CD4-positive, alpha-beta memory T cell (primary cell): ENCODE measurements at regions of chr14 and their contacts with region 1.

Region 1: GRCh38 chr14:60151715-60152114 is 13.5 kb downstream of the DHRS7 start:
- DNase-seq: peak; percentile 63 to 85 (median 68)
- H3K4me3 ChIP-seq: no peak overlapping the region
- H3K4me3 Mint-ChIP-seq: peak overlapping the region in 7 of 8 donors; percentile 17 to 69 (median 36)
- H3K27ac ChIP-seq: peak overlapping the region; percentile 50
- H3K27ac Mint-ChIP-seq: peak overlapping the region; percentile 90 to 95 (median 94)
- H3K4me1 ChIP-seq: peaks cover 49% of the 10 kb centered on the region
- H3K4me1 Mint-ChIP-seq: peaks cover 35 to 54% (median 44%) of the 10 kb centered on the region in 4 donors
- H3K27me3 ChIP-seq: no peaks in the 10 kb centered on the region
- H3K27me3 Mint-ChIP-seq: no peaks in the 10 kb centered on the region

Region 2: GRCh38 chr14:60057793-60058486 is 93.8 kb before region 1 on chr14:
- CTCF ChIA-PET with region 1: no interaction called
- POLR2A ChIA-PET with region 1: no interaction called
- intact Hi-C with region 1: no loop called
- DNase-seq: no peak
- H3K4me3 ChIP-seq: no peak overlapping the region
- H3K4me3 Mint-ChIP-seq: no peak overlapping the region
- H3K27ac ChIP-seq: no peak overlapping the region
- H3K27ac Mint-ChIP-seq: no peak overlapping the region
- H3K4me1 ChIP-seq: no peaks in the 10 kb centered on the region
- H3K4me1 Mint-ChIP-seq: no peaks in the 10 kb centered on the region
- H3K27me3 ChIP-seq: peaks cover 3% of the 10 kb centered on the region
- H3K27me3 Mint-ChIP-seq: peaks cover 5 to 22% of the 10 kb centered on the region in 2 donors

Region 3: GRCh38 chr14:60116181-60116580 is 35.5 kb before region 1 on chr14:
- CTCF ChIA-PET with region 1: no interaction called
- POLR2A ChIA-PET with region 1: no interaction called
- intact Hi-C with region 1: loop called (anchors 5 kb)
- DNase-seq: no peak
- H3K4me3 ChIP-seq: no peak overlapping the region
- H3K4me3 Mint-ChIP-seq: no peak overlapping the region
- H3K27ac ChIP-seq: no peak overlapping the region
- H3K27ac Mint-ChIP-seq: no peak overlapping the region
- H3K4me1 ChIP-seq: no peaks in the 10 kb centered on the region
- H3K4me1 Mint-ChIP-seq: peaks cover 5 to 7% (median 6%) of the 10 kb centered on the region in 4 donors
- H3K27me3 ChIP-seq: no peaks in the 10 kb centered on the region
- H3K27me3 Mint-ChIP-seq: no peaks in the 10 kb centered on the region